ENCODE measurements at regions of chr4 and their contacts with region 1.

Region 1: GRCh38 chr4:183256756-183257385 is 63.2 kb downstream of the CLDN22 start:
- DNase-seq: no peak
- H3K4me3 ChIP-seq: no peak overlapping the region
- H3K27ac ChIP-seq: peak overlapping the region; percentile 37
- H3K4me1 ChIP-seq: peaks cover 28% of the 10 kb centered on the region
- H3K27me3 ChIP-seq: no peaks in the 10 kb centered on the region
- CTCF ChIP-seq: peak; percentile 13 to 75 (median 69)
- POLR2A ChIP-seq: no peak

Region 2: DNA sequence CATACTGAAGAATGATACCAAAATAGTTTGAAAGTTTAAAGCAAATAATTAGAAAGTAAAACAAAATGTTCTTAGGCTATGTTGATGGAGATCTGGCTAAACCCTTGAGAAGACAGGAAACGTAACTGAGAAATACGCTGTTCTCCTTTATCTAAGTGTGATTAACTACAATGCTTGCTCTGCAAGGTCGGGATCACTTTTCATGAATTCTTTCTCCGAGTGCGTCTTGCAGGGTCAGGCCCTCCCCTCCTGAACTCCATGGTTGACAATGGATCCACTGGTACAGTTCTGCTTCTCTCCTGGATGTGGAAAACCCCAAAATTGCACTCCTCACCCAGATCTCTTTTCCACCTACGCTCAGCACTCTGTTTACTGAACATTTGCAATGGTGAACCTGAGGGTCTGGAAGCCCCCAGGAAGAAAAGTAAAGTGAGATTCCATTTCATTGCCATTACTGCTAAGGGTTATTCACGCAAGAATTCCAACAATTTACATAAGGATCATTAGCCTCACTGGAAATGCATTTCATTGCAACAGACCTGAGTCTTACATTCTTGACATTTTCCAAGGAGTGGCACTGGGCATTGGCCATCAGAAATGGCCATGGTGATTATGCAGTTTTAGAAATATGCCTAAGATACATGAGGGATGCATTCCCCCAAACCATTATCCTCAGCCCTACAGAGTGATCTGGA is 182.4 kb before region 1 on chr4:
- intact Hi-C with region 1: loop called (anchors 5 kb)
- DNase-seq: no peak
- H3K4me3 ChIP-seq: no peak overlapping the region
- H3K27ac ChIP-seq: no peak overlapping the region
- H3K4me1 ChIP-seq: no peaks in the 10 kb centered on the region
- H3K27me3 ChIP-seq: no peaks in the 10 kb centered on the region
- CTCF ChIP-seq: no peak
- POLR2A ChIP-seq: no peak

Region 3: DNA sequence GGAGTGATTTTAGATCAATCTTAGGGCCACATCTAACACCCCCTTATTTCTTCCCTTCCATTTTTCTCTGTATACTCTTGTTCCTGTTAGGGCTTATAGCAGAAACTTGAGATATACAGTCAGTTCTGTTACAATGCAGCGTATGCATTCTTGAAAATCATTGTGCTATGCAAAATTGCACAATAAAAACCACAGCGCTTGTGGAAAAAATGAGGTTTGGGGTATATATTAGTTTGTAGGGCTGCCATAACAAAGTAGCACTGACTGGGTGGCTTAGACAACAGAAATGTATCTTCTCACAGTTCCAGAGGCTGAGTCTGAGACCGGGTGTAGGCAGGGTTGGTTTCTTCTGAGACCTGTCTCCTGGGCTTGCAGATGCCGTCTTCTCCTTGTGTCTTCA is 98.8 kb before region 1 on chr4:
- intact Hi-C with region 1: no loop called
- DNase-seq: no peak
- H3K4me3 ChIP-seq: no peak overlapping the region
- H3K27ac ChIP-seq: no peak overlapping the region
- H3K4me1 ChIP-seq: no peaks in the 10 kb centered on the region
- H3K27me3 ChIP-seq: no peaks in the 10 kb centered on the region
- CTCF ChIP-seq: no peak
- POLR2A ChIP-seq: no peak

Measured in vagina (tissue), 2 donors.